Colonic mucosa (tissue), 4 donors: ENCODE measurements at regions of chr12 and their contacts with region 1.

Region 1: GRCh38 chr12:66693901-66694675 is 15.2 kb upstream of the GRIP1 start:
- DNase-seq: peak; percentile 24
- H3K4me3 ChIP-seq: no peak overlapping the region
- H3K27ac ChIP-seq: no peak overlapping the region
- H3K4me1 ChIP-seq: no peaks in the 10 kb centered on the region
- H3K27me3 ChIP-seq: no peaks in the 10 kb centered on the region
- CTCF ChIP-seq: peak; percentile 48

Region 2: GRCh38 chr12:66269757-66270383 is 424.2 kb before region 1 on chr12:
- intact Hi-C with region 1: loop called (anchors 5 kb)
- DNase-seq: no peak
- H3K4me3 ChIP-seq: no peak overlapping the region
- H3K27ac ChIP-seq: no peak overlapping the region
- H3K4me1 ChIP-seq: no peaks in the 10 kb centered on the region
- H3K27me3 ChIP-seq: no peaks in the 10 kb centered on the region
- CTCF ChIP-seq: peak; percentile 59

Region 3: GRCh38 chr12:66352197-66352596 is 341.9 kb before region 1 on chr12:
- intact Hi-C with region 1: loop called (anchors 5 kb)
- DNase-seq: peak; percentile 19
- H3K4me3 ChIP-seq: no peak overlapping the region
- H3K27ac ChIP-seq: no peak overlapping the region
- H3K4me1 ChIP-seq: no peaks in the 10 kb centered on the region
- H3K27me3 ChIP-seq: no peaks in the 10 kb centered on the region
- CTCF ChIP-seq: no peak

Region 4: DNA sequence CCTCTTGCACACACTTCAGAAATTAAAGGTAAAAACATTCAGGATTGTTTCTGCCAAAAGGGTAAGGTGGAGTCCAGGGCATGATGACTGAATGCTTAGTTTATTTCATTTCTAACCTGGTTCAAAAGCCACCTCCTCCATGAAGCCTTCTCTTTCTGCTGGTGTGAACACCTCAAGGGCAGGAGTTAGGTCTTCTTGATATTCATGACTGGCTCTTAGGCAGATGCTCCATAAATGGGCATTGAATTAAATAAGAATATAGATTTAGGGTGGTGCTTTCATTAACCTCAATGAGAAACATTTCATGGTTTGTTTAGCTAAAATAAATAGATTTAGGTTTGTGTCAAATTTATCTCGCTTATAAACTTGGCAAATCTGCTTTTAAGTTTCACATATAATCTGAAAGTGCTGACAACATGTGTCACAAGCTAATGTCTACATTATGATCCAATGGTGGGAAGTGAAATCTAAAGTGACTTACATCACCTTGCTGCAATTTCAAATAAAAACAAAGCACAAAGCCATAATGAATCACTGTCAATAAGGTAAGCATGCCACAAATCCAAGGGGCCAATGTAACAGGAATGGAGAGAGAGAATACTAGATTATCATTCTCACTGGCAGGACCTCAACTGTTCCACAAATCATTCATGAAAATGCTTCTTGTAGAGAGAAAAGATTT is 57.5 kb after region 1 on chr12:
- intact Hi-C with region 1: no loop called
- DNase-seq: no peak
- H3K4me3 ChIP-seq: no peak overlapping the region
- H3K27ac ChIP-seq: no peak overlapping the region
- H3K4me1 ChIP-seq: no peaks in the 10 kb centered on the region
- H3K27me3 ChIP-seq: no peaks in the 10 kb centered on the region
- CTCF ChIP-seq: no peak

Region 5: DNA sequence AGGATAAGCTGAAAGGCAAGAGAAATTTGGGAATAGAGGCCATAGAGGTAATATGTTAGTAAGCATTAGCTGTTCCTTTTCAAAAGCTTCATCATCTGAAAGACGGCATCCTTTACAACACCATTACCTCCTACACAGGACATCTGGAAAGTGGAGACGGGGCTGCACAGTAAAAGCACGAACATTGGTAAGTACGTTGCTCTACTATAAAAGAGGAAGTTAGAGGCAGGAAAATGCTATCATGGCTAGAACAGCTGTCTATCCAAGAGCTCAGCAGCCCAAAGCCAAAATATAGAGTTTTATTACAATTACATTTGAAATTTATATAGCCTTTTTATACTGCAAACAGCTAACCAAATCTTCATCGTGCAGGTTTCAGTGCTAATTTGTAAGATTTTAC is 157.0 kb after region 1 on chr12:
- intact Hi-C with region 1: loop called (anchors 10 kb)
- DNase-seq: no peak
- H3K4me3 ChIP-seq: no peak overlapping the region
- H3K27ac ChIP-seq: no peak overlapping the region
- H3K4me1 ChIP-seq: no peaks in the 10 kb centered on the region
- H3K27me3 ChIP-seq: no peaks in the 10 kb centered on the region
- CTCF ChIP-seq: no peak

Region 6: DNA sequence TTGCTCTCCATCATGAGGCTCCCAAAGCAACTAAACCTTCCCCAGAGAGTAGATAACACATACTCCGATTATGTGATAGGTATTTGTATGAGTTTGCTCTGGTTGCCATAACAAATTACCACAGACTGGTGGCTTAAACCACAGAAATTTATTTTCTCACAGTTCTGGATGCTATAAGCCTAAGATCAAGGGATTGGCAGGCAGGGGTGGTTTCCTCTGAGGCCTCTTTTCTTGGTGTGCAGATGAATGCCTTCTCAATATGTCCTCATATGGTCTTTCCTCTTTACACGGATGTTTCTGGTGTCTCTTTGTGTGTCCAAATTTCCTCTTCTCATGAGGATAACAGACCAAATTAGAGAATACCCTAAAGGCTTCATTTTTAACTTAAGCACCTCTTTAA is 270.5 kb after region 1 on chr12:
- intact Hi-C with region 1: no loop called
- DNase-seq: no peak
- H3K4me3 ChIP-seq: no peak overlapping the region
- H3K27ac ChIP-seq: no peak overlapping the region
- H3K4me1 ChIP-seq: no peaks in the 10 kb centered on the region
- H3K27me3 ChIP-seq: no peaks in the 10 kb centered on the region
- CTCF ChIP-seq: no peak